Activated CD8-positive, alpha-beta T cell treated with anti-CD3 and anti-CD28 coated beads for 36 hours (primary cell): ENCODE measurements at regions of chr2 and their contacts with region 1.

Region 1: DNA sequence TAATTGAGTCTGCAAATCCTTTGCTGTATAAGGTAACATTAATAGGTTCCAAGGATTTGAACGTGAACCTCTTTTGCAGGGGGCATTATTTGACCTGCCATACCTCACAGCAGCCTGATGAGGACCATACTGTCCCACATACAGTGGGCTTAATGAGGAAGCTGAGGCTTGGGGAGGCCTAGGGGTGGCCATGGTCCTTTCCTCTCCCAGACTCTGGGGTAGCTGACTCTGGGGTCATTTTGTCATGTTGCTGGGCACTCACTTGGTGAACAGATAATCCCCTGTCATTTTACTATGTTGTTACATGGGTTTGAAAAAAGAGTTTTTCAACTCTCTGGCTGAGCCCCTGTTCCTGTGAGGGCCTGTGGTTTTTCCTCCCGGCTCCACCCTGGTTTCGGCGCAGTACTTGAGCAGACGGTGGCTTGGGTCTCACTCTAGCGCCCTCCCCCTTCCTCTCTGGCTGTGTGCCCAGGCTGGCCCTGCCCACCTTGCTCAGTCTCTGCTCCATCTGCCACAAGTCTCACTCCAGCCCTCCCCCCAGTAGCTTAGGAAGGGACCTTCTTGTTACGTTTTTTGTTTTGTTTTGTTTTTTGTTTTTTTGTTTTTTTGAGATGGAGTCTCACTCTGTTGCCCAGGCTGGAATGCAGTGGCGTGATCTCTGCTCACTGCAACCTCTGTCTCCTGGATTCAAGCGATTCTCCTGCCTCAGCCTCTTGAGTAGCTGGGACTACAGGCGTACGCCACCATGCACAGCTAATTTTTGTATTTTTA is 21.0 kb downstream of the INPP4A start:
- DNase-seq: peak; percentile 81
- ATAC-seq: peak; percentile 11
- H3K4me3 Mint-ChIP-seq: peak overlapping the region; percentile 69
- H3K27ac Mint-ChIP-seq: peak overlapping the region; percentile 97
- H3K4me1 Mint-ChIP-seq: peaks cover 87% of the 10 kb centered on the region
- H3K27me3 Mint-ChIP-seq: no peaks in the 10 kb centered on the region
- CTCF ChIP-seq: no peak

Region 2: DNA sequence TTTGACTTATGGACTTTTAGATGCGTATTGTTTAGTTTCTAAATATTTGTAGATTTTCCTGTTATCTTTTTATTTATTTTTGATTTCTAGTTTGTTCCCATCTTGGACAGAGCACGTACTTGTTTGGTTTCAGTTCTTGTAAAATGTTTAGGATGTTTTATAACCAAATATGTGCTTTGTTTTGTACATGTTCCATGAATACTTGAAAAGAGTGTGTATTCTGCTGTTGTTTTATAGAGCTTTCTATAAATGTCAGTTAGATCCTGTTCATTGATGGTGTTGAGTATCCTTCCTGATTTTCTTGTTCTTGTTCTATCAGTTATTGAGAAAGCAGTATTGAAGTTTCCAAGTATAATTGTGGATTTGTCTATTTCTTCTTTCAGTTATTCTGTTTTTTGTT is 357.5 kb before region 1 on chr2:
- CTCF ChIA-PET with region 1: no interaction called
- POLR2A ChIA-PET with region 1: no interaction called
- intact Hi-C with region 1: no loop called
- DNase-seq: no peak
- ATAC-seq: no peak
- H3K4me3 Mint-ChIP-seq: no peak overlapping the region
- H3K27ac Mint-ChIP-seq: no peak overlapping the region
- H3K4me1 Mint-ChIP-seq: no peaks in the 10 kb centered on the region
- H3K27me3 Mint-ChIP-seq: peaks cover 7% of the 10 kb centered on the region
- CTCF ChIP-seq: no peak

Region 3: GRCh38 chr2:98438190-98439133 is 27.2 kb before region 1 on chr2:
- CTCF ChIA-PET with region 1: no interaction called
- POLR2A ChIA-PET with region 1: interaction called, 3 read pairs
- intact Hi-C with region 1: loop called (anchors 2 kb)
- DNase-seq: no peak
- ATAC-seq: peak; percentile 92
- H3K4me3 Mint-ChIP-seq: peak overlapping the region; percentile 36
- H3K27ac Mint-ChIP-seq: peak overlapping the region; percentile 90
- H3K4me1 Mint-ChIP-seq: peaks cover 18% of the 10 kb centered on the region
- H3K27me3 Mint-ChIP-seq: no peaks in the 10 kb centered on the region
- CTCF ChIP-seq: no peak

Region 4: GRCh38 chr2:98444436-98445176 is 21.0 kb before region 1 on chr2 and contains the start of gene INPP4A:
- CTCF ChIA-PET with region 1: interaction called, 14 read pairs
- POLR2A ChIA-PET with region 1: interaction called, 8 read pairs
- intact Hi-C with region 1: loop called (anchors 2 kb)
- DNase-seq: peak; percentile 73
- ATAC-seq: peak; percentile 73
- H3K4me3 Mint-ChIP-seq: peak within 1 kb of the TSS; percentile 81
- H3K27ac Mint-ChIP-seq: peak within 1 kb of the TSS; percentile 90
- H3K4me1 Mint-ChIP-seq: peaks cover 34% of the 10 kb centered on the region
- H3K27me3 Mint-ChIP-seq: no peaks in the 10 kb centered on the region
- CTCF ChIP-seq: no peak
- total RNA-seq, gene INPP4A: 46.7 to 46.9 TPM

Region 5: DNA sequence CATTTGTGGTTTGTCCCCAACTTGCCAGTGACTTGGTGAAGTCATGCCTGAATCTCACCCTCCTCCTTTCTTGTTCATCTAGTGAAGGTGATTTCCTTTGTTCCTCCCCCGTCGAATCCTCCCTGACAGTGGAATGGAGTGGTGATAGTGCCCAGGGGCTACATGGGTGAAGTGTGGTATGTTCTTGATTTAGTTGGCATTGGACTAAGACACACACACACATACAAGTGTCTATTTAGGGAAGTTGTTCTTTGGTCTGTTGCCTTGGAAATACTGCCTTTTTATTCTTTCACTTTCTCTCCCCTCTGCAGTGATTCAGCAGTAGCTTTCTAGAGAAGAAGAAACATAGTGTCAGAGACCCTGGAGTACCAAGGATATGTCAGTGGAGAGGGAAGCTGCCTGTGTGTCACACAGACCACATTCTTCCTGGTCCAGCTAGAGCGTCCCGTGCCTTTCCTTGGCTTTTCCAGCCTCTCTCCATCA is 10.1 kb before region 1 on chr2:
- CTCF ChIA-PET with region 1: interaction called, 6 read pairs
- POLR2A ChIA-PET with region 1: interaction called, 22 read pairs
- intact Hi-C with region 1: no loop called
- DNase-seq: peak; percentile 53
- ATAC-seq: peak; percentile 50
- H3K4me3 Mint-ChIP-seq: peak overlapping the region; percentile 65
- H3K27ac Mint-ChIP-seq: peak overlapping the region; percentile 92
- H3K4me1 Mint-ChIP-seq: peaks cover 95% of the 10 kb centered on the region
- H3K27me3 Mint-ChIP-seq: no peaks in the 10 kb centered on the region
- CTCF ChIP-seq: no peak

Region 6: GRCh38 chr2:98479959-98480524 is 14.4 kb after region 1 on chr2:
- CTCF ChIA-PET with region 1: interaction called, 30 read pairs
- POLR2A ChIA-PET with region 1: interaction called, 27 read pairs
- intact Hi-C with region 1: no loop called
- DNase-seq: peak; percentile 76
- ATAC-seq: peak; percentile 72
- H3K4me3 Mint-ChIP-seq: peak overlapping the region; percentile 30
- H3K27ac Mint-ChIP-seq: peak overlapping the region; percentile 91
- H3K4me1 Mint-ChIP-seq: peaks cover 98% of the 10 kb centered on the region
- H3K27me3 Mint-ChIP-seq: no peaks in the 10 kb centered on the region
- CTCF ChIP-seq: no peak